B cell (primary cell): ENCODE measurements at regions of chr20 and their contacts with region 1.

Region 1: DNA sequence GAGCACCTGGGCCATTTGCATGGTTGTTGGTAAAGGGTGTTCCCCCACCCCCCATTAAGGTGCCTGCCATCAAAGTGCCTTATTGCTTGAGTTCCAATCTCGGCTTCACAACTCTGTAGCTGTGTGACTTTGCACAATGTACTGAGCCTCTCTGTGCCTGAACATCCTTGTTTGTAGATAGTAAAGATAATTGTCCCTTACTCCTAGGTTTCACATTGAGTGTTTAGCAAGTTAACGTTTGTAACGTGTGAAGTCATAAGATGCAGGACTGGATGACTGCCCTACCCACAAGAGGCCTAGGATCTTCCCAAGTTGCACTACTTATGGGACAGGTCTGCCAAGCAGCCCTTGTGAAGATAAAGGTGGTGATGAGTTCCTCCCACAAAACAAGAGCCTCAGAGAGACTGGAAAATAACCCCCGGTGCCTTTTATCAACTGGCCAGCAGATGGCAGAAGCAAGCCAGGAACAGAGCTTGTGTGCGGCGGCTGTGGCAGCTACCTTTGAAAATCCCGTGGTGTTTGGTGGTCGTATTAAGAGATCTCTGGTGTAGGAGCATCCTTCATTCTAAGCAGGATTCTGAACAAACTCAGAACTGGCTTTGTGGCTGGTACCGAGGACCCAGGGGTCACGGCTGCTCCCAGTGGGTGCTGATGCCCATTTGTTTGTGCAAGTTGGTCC is 99.0 kb downstream of the CDH26 start:
- DNase-seq: peak; percentile 68
- ATAC-seq: peak; percentile 26
- H3K4me3 ChIP-seq: peak overlapping the region in 1 of 5 experiments; percentile 0
- H3K4me3 Mint-ChIP-seq: peak overlapping the region; percentile 55
- H3K27ac ChIP-seq: no peak overlapping the region
- H3K27ac Mint-ChIP-seq: no peak overlapping the region
- H3K4me1 ChIP-seq: peaks cover 23 to 38% of the 10 kb centered on the region in 2 donors
- H3K4me1 Mint-ChIP-seq: peaks cover 36% of the 10 kb centered on the region
- H3K27me3 ChIP-seq: no peaks in the 10 kb centered on the region
- H3K27me3 Mint-ChIP-seq: peaks cover 13% of the 10 kb centered on the region
- CTCF ChIP-seq: peak; percentile 83

Region 2: DNA sequence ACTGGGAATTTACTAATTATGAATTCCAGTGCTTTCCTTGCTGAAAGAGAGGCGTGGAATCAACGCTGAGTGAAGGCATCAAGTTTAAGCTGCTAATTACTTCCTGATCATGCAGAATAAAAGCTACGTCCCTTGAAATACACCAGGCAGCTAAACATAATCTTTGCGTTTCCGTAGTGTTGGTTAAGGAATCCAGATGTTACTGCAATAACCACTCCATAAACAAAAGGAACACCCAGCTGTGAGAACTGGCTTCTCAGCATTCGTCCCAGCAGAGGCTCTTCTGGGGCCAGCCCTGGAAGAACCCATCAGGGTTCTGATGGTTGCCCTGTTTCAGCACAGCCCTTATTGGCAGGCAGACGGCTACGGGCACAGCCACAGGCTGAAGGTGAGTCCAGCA is 12.4 kb after region 1 on chr20:
- CTCF ChIA-PET with region 1: interaction called, 10 read pairs
- POLR2A ChIA-PET with region 1: no interaction called
- intact Hi-C with region 1: no loop called
- DNase-seq: no peak
- ATAC-seq: no peak
- H3K4me3 ChIP-seq: no peak overlapping the region
- H3K4me3 Mint-ChIP-seq: no peak overlapping the region
- H3K27ac ChIP-seq: no peak overlapping the region
- H3K27ac Mint-ChIP-seq: no peak overlapping the region
- H3K4me1 ChIP-seq: no peaks in the 10 kb centered on the region
- H3K4me1 Mint-ChIP-seq: no peaks in the 10 kb centered on the region
- H3K27me3 ChIP-seq: no peaks in the 10 kb centered on the region
- H3K27me3 Mint-ChIP-seq: no peaks in the 10 kb centered on the region
- CTCF ChIP-seq: no peak

Region 3: DNA sequence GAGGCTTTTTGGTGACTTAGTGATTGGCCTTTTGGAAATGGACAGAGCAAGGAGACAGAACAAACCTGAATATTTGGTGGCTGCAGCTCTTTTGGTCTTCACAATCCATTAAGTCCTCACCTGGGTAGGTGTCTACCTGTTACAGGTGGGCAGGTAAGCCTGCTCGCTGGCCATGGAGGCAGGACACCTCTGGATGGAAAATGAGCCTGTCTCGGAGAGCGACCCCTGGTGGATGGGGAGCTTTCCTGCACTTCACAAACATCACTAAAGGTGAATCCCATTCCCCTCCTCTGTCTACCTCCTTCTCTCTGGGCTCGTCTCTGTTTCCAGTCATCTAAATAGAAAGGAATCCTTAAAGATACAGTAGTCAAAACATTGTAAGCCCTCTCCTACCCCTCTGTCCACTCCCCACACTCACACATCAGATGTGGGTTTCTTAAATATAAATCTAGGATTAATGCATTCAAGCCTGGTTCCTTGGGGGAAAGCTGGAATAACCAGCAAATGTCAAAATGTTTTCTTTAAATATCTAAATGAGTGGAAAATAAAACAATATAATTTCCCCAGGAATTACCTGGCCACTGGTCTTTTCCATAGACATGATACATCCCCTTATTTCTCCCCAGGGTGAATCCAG is 205.8 kb after region 1 on chr20:
- CTCF ChIA-PET with region 1: interaction called, 32 read pairs
- POLR2A ChIA-PET with region 1: no interaction called
- intact Hi-C with region 1: no loop called
- DNase-seq: peak; percentile 44
- ATAC-seq: no peak
- H3K4me3 ChIP-seq: no peak overlapping the region
- H3K4me3 Mint-ChIP-seq: no peak overlapping the region
- H3K27ac ChIP-seq: no peak overlapping the region
- H3K27ac Mint-ChIP-seq: no peak overlapping the region
- H3K4me1 ChIP-seq: no peaks in the 10 kb centered on the region
- H3K4me1 Mint-ChIP-seq: no peaks in the 10 kb centered on the region
- H3K27me3 ChIP-seq: no peaks in the 10 kb centered on the region
- H3K27me3 Mint-ChIP-seq: no peaks in the 10 kb centered on the region
- CTCF ChIP-seq: peak; percentile 68

Region 4: DNA sequence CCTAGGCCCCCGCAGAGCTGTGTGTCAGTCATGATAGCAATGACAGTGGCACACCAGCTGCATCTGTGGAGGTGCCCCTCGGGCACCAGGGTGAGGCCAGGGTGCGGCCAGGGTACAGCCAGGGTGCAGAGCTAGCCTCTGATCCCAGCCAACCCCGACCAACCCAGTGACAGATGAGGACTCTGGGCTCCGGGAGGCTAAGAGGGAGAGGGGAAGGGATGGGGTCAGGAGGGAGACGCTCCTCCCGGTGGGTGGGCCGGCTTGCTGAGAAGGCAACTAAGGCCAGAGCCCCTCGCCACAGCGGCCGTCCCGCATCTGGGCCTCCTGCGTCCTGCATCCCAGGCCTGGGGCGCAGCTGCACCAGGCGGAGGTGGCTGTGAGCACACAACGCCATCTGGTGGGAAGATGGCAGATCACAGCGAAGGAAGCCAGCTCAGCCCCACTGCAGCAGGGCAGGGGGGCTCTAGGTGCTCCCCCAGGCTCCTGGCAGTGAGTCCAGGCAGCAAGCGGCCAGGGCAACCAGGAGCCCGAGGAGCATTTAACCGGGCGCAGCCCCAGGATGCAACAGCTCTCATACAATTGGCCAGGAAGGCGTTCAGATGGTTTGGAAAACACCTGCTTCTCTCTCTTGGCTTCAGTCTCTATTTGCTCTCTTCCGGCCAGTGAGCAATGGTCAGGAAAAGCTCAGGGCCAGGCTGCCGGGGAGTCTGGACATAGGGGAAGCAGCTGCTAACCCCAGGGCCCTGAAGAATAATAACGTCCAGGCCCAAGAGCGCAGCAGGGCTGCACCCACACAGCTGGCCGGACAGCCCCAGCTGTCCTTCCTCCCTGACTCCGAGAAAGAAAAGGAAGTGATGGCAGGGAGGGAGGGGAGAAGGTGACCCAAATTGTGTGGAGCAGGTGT is 1839.0 kb after region 1 on chr20:
- CTCF ChIA-PET with region 1: interaction called, 10 read pairs
- POLR2A ChIA-PET with region 1: no interaction called
- intact Hi-C with region 1: no loop called
- DNase-seq: peak; percentile 23
- ATAC-seq: no peak
- H3K4me3 ChIP-seq: no peak overlapping the region
- H3K4me3 Mint-ChIP-seq: no peak overlapping the region
- H3K27ac ChIP-seq: no peak overlapping the region
- H3K27ac Mint-ChIP-seq: no peak overlapping the region
- H3K4me1 ChIP-seq: no peaks in the 10 kb centered on the region
- H3K4me1 Mint-ChIP-seq: no peaks in the 10 kb centered on the region
- H3K27me3 ChIP-seq: no peaks in the 10 kb centered on the region
- H3K27me3 Mint-ChIP-seq: peaks cover 3% of the 10 kb centered on the region
- CTCF ChIP-seq: peak; percentile 51